ENCODE measurements at regions of chr11 and their contacts with region 1.

Region 1: DNA sequence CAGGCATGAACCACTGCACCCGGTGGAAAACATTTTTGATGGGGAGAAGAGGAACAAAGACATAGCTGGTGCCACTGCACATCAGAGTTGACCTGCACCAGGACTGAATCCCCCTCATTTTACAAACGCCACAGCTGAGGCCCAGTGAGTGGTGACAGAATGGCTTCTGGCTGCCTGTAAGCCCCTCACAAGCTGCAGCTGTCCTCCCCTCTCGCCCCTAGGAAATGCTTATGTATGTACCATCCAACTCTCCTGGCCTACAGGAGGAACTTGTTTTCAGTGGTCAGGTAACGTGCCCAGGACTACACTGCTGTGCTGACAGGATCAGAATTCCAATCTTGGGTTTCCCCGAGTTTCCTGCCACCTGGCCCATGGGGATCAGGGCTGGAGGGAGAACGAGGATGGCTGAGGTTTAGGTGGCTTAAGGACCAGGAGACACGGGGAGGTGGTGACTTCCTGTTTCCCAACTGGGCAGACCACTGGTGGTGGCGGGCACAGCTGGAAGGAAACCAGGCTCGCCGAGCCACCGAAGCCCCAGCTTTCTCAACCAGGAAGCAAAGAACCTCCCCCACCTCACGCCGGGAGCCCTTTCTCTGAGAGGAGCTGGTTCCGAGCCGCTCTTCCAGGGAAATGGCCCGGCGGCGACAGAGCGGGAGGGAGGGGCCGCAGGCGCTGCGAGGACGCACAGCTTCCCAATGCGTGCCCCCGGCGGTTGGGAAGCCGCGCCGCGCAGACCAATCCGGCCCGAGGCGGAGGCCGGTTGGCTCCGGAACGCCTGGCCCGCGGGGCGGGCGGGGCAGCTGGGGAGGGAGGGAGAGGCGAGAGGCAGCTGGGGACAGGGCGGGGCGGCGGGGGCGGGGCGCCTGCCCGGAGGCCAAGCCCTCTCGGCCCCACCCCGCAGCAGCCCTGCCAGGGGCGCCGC is 1.0 kb upstream of the LRFN4 start:
- DNase-seq: peak; percentile 85
- H3K4me3 ChIP-seq: peak overlapping the region; percentile 29 to 59 (median 54)
- H3K27ac ChIP-seq: peak overlapping the region; percentile 56
- H3K4me1 ChIP-seq: peaks cover 9% of the 10 kb centered on the region
- H3K27me3 ChIP-seq: no peaks in the 10 kb centered on the region
- CTCF ChIP-seq: no peak
- POLR2A ChIP-seq: peak; percentile 71

Region 2: GRCh38 chr11:66035653-66036333 is 820.0 kb before region 1 on chr11:
- CTCF ChIA-PET with region 1: no interaction called
- POLR2A ChIA-PET with region 1: no interaction called
- dilution Hi-C with region 1: no loop called
- intact Hi-C with region 1: no loop called
- DNase-seq: no peak
- H3K4me3 ChIP-seq: no peak overlapping the region
- H3K27ac ChIP-seq: no peak overlapping the region
- H3K4me1 ChIP-seq: no peaks in the 10 kb centered on the region
- H3K27me3 ChIP-seq: peaks cover 0 to 10% of the 10 kb centered on the region in 2 experiments
- CTCF ChIP-seq: no peak
- POLR2A ChIP-seq: no peak

Region 3: GRCh38 chr11:66842896-66843775 is 12.7 kb before region 1 on chr11 and contains the start of gene RCE1:
- CTCF ChIA-PET with region 1: interaction called, 9 read pairs
- POLR2A ChIA-PET with region 1: interaction called, 5 read pairs
- dilution Hi-C with region 1: no loop called
- intact Hi-C with region 1: loop called (anchors 2 kb)
- DNase-seq: peak; percentile 91
- H3K4me3 ChIP-seq: peak within 1 kb of the TSS; percentile 63 to 95 (median 74)
- H3K27ac ChIP-seq: peak within 1 kb of the TSS; percentile 97
- H3K4me1 ChIP-seq: peaks cover 27% of the 10 kb centered on the region
- H3K27me3 ChIP-seq: no peaks in the 10 kb centered on the region
- CTCF ChIP-seq: no peak
- POLR2A ChIP-seq: peak; percentile 94
- total RNA-seq, gene RCE1: 26.9 and 27.8 TPM in 2 replicates

Region 4: GRCh38 chr11:66958232-66958955 is 102.6 kb after region 1 on chr11 and contains the start of gene PC:
- CTCF ChIA-PET with region 1: no interaction called
- POLR2A ChIA-PET with region 1: no interaction called
- dilution Hi-C with region 1: no loop called
- intact Hi-C with region 1: loop called (anchors 2 kb)
- DNase-seq: peak; percentile 100
- H3K4me3 ChIP-seq: peak within 1 kb of the TSS; percentile 27 to 73 (median 55)
- H3K27ac ChIP-seq: no peak within 1 kb of the TSS
- H3K4me1 ChIP-seq: peaks cover 4% of the 10 kb centered on the region
- H3K27me3 ChIP-seq: no peaks in the 10 kb centered on the region
- CTCF ChIP-seq: no peak
- POLR2A ChIP-seq: no peak
- total RNA-seq, gene PC: 15.6 and 17.5 TPM in 2 replicates

Region 5: GRCh38 chr11:67113231-67113721 is 257.4 kb after region 1 on chr11:
- CTCF ChIA-PET with region 1: no interaction called
- POLR2A ChIA-PET with region 1: no interaction called
- dilution Hi-C with region 1: no loop called
- intact Hi-C with region 1: no loop called
- DNase-seq: no peak
- H3K4me3 ChIP-seq: no peak overlapping the region
- H3K27ac ChIP-seq: no peak overlapping the region
- H3K4me1 ChIP-seq: peaks cover 6% of the 10 kb centered on the region
- H3K27me3 ChIP-seq: peaks cover 4 to 5% of the 10 kb centered on the region in 2 experiments
- CTCF ChIP-seq: no peak
- POLR2A ChIP-seq: no peak

Measured in endothelial cell of umbilical vein (primary cell).